Head of caudate nucleus (tissue), 42 donors: ENCODE measurements at regions of chr1 and their contacts with region 1.

Region 1: GRCh38 chr1:42335050-42335808 is at the start of gene FOXJ3:
- DNase-seq: peak; percentile 78 to 97 (median 92)

Region 2: GRCh38 chr1:42176902-42177519 is 158.2 kb before region 1 on chr1:
- intact Hi-C with region 1: loop called (anchors 5 kb)
- DNase-seq: peak in 21 of 42 donors; percentile 22 to 62 (median 39)

Region 3: DNA sequence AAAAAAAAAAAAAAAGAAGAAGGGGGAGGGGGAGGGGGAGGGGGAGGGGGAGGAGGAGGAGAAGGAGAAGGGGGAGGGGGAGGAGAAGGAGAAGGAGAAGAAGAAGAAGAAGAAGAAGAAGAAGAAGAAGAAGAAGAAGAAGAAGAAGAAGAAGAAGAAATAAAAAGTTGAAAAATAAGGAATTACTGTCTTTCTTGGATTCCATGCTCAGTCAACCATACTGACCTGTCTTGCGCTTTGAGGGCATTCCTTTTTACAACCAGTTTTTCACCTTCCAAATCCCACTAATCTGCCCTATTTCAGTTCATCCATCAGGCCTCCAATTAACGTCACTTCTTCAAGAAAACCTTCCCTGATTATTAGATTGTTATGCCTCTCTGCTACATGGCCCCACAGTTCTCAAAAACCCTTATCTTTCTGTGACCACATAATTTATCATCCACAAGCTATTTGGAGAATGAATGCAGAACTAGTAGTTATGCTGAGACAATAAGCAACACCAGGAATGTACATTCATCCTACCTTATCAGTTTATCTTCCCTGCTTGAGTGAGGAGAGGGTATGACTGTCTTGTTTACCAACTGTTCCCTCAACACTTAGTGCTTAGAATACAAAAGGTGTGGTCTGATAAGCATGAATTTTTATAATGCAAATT is 113.2 kb before region 1 on chr1:
- intact Hi-C with region 1: no loop called
- DNase-seq: no peak

Region 4: DNA sequence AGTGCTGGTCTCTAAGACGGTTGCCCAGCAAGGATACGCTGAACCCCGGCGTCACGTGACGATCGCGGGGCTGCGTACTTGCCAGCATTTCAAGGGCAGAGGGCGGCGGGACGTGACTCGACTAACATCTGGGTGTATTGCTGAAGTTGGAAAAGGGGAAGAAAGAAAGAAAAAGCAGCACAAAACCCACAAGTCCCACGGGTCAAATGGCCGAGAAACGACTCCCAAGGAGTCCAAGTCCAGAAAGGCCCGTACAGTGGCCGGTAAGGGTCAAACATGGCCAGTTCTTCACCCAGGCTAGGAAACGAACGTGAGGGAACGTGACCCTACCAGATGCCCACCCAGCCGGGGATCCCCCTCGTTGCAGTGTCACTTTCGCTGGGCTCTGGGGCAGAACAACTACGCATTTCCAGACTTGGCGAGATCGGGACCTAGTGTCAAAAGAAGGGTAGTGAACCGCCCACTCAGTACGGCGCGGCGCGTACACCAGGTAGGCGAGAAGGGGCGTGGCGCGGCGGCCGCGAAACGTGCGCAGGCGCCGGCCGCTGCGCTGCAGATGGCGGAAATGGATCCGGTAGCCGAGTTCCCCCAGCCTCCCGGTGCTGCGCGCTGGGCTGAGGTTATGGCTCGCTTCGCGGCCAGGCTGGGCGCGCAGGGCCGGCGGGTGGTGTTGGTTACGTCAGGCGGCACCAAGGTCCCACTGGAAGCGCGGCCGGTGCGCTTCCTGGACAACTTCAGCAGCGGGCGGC is 121.0 kb after region 1 on chr1 and contains the starts of genes PPCS and ZMYND12:
- intact Hi-C with region 1: loop called (anchors 2 kb)
- DNase-seq: peak; percentile 69 to 93 (median 85)

Region 5: DNA sequence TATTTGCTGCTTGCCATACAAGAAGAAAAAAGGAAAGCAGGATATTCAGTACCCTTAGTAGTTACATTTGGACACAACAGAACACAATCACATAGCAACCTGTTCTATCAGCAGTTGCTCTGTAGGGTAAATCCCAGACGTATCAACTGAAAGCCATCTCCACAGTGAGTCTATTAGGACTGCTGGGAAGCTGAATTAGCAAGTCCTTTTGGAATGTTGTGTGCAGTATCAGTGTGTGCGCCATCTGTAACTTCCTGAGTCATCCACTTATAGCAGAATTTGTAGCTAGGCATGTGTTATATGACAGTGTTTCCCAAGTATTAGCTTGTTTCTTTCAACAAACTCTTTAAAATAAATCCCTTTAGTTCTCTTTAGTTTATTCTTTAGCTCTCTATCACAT is 149.2 kb after region 1 on chr1:
- intact Hi-C with region 1: no loop called
- DNase-seq: no peak

Region 6: DNA sequence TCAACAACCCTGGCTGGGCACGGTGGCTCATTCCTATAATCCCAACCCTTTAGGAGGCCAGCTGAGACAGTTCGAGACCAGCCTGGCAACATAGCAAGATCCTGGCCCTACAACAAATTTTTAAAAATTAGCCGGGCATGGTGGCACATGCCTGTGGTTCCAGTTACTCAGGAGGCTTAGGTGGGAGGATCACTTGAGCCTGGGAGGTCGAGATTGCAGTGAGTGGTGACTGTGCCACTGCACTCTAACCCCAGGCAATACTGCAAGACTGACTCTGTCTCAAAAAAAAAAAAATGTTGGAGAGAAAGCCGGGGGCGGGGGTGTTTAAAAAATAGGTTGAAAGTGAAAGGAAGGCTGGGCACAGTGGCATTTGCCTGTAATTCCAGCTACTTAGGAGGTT is 388.3 kb after region 1 on chr1:
- intact Hi-C with region 1: no loop called
- DNase-seq: peak in 1 of 42 donors; percentile 10